GM10248 (cell line): ENCODE measurements at regions of chr2 and their contacts with region 1.

Region 1: GRCh38 chr2:26959331-26959730 is 11.1 kb upstream of the MAPRE3 start:
- DNase-seq: no peak
- CTCF ChIP-seq: no peak

Region 2: GRCh38 chr2:26640781-26641564 is 318.4 kb before region 1 on chr2 and contains the start of gene CIB4:
- CTCF ChIA-PET with region 1: no interaction called
- POLR2A ChIA-PET with region 1: no interaction called
- DNase-seq: no peak
- CTCF ChIP-seq: no peak

Region 3: GRCh38 chr2:26942543-26943295 is 16.6 kb before region 1 on chr2:
- CTCF ChIA-PET with region 1: interaction called, 22 read pairs
- POLR2A ChIA-PET with region 1: no interaction called
- DNase-seq: peak; percentile 85
- CTCF ChIP-seq: peak; percentile 71

Region 4: DNA sequence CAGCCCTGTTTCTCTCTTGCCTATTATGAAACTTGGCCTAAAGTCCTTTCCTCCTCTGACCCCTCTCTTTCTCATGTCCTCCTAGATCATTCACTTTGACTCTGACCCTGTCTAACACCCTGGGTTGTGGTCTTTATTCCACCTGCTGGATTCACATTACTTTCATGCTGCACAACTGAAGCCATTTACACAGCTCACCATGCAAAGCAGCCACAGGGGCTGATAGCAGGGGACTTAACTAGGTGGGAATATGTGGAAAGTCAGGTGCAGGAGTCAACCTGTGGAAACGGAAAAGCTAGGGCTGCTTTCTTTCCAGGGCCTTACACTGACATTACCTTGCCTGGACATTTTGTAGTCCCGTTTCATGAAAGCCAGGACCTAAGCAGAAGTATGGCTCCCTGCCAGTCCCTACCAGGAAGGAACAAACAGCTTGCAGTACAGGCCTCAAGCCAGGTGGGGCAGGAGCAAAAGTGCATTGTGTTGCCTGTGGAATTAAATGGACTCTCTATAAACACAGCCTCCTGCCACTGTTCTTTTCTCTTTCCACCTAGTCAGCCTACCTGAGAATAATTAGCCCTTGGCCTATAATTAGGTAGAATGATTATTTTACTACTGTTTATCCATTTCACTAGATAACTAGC is 22.9 kb after region 1 on chr2:
- CTCF ChIA-PET with region 1: interaction called, 33 read pairs
- POLR2A ChIA-PET with region 1: no interaction called
- DNase-seq: peak; percentile 41
- CTCF ChIP-seq: no peak

Region 5: DNA sequence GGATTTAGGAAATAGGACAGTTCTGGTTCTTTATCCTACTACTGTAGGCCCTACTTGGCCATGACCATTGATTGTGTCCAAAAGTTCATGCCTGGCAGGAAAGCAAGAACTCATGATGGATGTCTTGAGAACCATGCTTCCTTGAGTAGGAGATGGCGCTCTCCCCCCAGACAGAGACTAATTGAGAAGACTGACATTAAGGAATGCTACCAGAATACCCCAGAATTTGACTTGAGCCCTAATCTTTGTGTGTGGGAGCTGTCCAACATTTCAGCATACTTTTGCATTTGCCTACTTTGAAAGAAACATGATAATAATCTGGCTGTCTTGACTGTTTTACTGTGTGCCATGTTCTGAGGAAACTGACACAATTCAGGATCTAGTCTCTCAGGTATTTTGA is 34.4 kb after region 1 on chr2:
- CTCF ChIA-PET with region 1: interaction called, 17 read pairs
- POLR2A ChIA-PET with region 1: no interaction called
- DNase-seq: no peak
- CTCF ChIP-seq: no peak

Region 6: DNA sequence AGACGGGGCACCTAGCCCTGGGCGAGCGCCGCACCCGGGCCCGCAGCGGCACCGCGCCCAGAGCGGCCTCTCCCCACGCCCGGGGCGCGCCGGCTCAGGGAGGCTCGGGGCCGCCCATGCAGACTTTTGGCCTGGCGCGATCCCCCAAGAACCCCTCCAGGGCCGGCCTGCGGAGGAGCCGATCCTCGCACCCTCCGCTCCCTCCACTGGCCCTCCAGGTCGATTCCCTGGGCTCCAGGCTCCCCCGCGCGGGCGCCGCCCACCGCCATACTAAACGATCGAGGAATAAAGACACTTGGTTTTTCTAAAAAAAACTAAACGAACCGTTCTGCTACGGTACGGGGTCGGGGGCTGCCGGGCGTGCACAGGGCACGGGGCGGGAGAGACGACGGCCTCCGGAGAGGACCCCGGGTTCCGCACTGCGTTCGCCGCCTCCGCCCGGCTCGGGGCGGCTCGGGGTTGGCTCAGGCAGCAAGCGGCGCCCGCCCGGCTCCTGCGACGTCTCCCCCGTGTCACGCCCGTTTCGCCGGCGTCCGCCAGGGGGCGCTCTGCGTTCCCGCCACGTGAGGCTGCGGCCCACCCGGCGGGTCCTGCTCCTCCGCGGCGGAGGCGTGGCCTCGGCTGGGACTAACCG is 126.9 kb after region 1 on chr2:
- CTCF ChIA-PET with region 1: interaction called, 45 read pairs
- POLR2A ChIA-PET with region 1: no interaction called
- DNase-seq: peak; percentile 99
- CTCF ChIP-seq: peak; percentile 94